Head of caudate nucleus (tissue), 42 donors: ENCODE measurements at regions of chr9 and their contacts with region 1.

Region 1: DNA sequence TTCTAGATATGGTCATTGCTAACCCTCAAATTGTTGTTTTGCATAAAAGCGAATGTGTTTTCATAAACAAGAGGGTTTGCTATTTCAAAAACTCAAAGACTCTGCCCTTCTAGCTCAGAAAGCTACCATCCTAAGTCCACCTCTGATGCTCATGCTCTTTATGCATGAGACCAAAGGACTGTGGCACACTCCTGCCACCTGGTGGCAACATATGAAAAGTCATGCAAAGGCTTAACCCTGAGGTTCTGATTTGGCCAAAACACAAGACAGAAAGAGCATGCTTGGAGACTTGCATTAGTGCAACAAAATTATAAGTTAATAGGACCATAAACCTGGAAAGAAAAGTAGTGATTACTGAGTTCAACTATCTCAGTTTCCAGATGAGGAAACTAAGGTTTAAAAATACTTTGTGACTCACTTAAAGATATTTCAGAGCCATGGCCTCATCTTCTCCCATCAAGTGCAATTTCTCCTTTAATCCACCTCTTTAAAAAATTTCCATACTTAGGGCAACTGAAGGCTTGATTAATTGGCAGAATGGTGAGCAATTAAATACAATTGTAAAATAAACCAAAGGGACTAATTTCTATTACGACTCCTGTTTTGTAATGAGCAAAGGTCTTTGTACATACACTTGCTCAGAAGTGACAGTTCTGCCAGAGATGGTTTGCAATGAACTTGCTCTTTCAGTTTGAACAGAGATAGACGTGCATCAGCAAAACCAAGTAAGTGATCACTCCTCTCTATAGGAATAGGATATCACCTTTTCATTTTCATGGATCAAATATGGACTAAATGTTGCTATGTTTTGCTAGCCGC is 110.7 kb upstream of the RAD23B start:
- DNase-seq: peak; percentile 16 to 94 (median 83)

Region 2: DNA sequence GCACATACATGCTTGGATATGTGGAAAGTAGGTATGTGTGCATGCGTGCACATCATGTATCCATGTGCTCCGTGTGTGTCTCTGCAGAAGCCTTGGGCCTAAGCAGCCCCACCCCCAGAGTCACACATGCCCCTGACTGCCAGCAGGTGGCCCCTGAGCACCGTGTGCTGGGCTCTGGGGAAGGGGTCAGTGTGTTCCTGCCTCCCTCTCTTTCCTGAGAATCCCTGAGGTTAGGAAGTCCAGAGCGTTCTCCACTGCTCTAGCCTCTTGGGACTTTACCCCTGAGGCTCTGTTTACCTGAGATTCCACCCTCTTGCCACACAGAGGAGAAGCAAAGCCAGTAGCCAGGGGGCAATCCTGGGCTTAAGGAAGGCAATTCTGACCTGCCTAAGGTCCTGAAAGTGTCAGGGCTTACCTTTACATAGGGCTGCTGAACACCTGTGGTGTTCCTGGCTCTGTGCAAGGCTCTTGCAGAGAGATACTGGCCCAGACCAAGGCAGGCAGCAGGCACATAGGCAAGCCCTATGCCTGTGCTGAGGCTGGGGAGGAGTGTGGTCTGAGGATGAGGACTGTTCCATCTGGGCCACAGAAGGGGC is 1270.8 kb before region 1 on chr9:
- intact Hi-C with region 1: loop called (anchors 10 kb)
- DNase-seq: peak in 40 of 42 donors; percentile 27 to 80 (median 56)